Activated CD4-positive, alpha-beta T cell treated with anti-CD3 and anti-CD28 coated beads, Interleukin-2, amount 10 ng/mL, durations not matched to agents 24 days and 14 days (primary cell): ENCODE measurements at regions of chr19 and their contacts with region 1.

Region 1: DNA sequence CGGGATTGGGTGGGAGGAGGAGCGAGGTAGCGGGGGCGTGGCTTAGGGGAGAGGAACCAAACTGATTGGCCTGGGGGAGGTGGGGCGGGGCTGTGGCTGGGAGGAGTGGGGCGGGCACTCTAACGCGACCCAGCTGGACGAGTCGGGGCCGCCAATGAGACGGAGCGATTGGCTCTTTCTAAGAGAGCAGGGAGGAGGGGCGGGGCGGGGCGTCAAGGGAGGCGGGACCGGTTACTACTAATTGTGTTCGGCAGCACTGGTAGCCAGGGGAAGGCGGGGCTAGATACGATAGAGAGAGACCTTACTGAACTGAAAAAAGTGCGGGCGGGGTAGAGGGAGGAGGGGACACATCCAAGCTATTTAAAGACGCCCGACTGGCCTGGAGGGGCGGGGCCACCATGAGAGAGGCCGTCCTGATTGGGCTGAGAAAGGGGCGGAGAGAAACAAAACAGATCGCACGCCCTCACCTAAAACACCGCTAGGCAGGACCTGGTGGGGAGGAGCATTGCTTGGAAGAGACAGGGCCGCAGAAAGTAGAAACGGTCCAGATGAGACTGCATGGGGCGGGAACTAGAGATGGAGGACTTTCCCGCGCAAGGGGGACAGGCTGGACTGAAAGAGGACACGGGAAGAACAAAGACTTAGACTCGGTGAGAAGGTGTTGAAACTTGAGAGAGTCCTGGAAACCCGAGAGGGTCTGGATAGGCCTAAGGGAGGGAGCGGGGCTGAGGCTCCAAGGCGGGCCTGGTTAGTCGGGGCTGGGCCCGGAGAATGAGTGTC is at the start of gene KCNC3:
- DNase-seq: peak; percentile 98
- H3K4me3 Mint-ChIP-seq: peak within 1 kb of the TSS; percentile 89
- H3K27ac Mint-ChIP-seq: peak within 1 kb of the TSS; percentile 92
- H3K4me1 Mint-ChIP-seq: peaks cover 73% of the 10 kb centered on the region
- H3K27me3 Mint-ChIP-seq: peaks cover 20% of the 10 kb centered on the region
- total RNA-seq, gene KCNC3: 20.3 TPM in 2 replicates

Region 2: DNA sequence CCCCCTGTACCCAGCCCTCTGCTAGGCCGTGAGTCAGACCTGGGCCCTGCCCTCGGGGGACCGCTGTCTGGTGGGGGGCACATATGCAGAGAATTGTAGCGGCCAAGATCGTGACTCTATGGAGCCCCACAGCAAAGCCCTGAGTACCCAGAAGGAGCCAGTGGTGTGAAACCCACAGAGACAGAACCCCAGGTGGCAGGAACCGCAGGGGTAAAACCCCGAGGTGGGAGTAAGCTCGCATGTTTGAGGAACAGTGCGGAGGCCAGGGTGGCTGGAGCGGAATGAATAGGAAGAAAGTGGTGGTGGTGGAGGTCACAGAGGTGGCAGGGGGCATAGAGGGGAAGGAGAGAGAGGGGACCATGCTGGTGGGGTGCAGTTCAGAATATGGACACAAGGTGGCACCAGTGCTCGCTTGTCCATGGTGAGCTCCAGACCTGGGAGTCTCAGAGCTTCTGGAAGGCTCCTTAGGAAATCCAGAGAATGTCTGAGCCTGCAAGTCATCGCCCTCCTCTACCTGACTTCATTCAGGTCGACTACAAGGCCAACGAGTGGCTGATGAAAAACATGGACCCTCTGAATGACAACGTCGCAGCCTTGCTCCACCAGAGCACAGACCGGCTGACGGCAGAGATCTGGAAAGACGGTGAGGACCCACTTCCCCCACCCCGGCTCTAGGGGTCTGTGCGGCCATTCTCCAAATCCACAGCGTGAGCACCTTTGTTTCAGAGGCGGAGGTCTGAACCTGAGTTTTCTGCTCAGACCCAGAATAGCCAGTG is 77.0 kb before region 1 on chr19:
- intact Hi-C with region 1: loop called (anchors 5 kb)
- DNase-seq: peak; percentile 74
- H3K4me3 Mint-ChIP-seq: no peak overlapping the region
- H3K27ac Mint-ChIP-seq: no peak overlapping the region
- H3K4me1 Mint-ChIP-seq: no peaks in the 10 kb centered on the region
- H3K27me3 Mint-ChIP-seq: no peaks in the 10 kb centered on the region

Region 3: DNA sequence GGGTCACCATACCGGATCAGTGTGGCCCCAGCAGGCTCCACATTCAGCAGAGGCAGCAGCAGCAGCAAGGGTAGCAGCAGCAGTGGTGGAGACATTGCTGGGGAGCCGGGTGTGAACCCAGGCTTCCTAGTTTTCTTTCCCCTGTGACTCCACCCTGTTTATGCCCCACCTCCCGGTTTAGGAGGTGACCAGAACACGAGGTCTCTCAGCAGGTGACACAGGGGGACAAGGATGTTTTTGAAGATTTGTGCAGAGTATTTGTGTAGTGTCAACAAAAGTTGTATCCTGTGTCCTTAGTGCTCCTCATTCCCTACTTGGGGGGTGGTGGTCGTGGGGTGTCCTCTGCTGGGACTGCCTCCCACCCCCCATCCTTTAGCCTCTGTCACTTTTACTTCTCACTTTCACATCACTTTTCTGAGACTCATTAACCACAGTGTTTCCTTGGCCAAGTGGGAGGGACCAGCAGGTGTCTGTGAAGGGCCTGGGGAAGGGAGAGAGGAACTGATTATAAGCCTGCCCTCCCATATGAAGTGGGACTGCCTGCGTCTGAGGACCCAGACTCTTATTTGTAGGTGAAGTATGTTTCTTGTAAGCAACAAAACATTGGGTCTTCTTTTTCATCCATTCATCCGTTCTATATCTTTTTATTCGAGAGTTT is 15.5 kb after region 1 on chr19:
- intact Hi-C with region 1: loop called (anchors 1 kb)
- DNase-seq: no peak
- H3K4me3 Mint-ChIP-seq: peak overlapping the region; percentile 39
- H3K27ac Mint-ChIP-seq: peak overlapping the region; percentile 70
- H3K4me1 Mint-ChIP-seq: peaks cover 27% of the 10 kb centered on the region
- H3K27me3 Mint-ChIP-seq: no peaks in the 10 kb centered on the region

Region 4: DNA sequence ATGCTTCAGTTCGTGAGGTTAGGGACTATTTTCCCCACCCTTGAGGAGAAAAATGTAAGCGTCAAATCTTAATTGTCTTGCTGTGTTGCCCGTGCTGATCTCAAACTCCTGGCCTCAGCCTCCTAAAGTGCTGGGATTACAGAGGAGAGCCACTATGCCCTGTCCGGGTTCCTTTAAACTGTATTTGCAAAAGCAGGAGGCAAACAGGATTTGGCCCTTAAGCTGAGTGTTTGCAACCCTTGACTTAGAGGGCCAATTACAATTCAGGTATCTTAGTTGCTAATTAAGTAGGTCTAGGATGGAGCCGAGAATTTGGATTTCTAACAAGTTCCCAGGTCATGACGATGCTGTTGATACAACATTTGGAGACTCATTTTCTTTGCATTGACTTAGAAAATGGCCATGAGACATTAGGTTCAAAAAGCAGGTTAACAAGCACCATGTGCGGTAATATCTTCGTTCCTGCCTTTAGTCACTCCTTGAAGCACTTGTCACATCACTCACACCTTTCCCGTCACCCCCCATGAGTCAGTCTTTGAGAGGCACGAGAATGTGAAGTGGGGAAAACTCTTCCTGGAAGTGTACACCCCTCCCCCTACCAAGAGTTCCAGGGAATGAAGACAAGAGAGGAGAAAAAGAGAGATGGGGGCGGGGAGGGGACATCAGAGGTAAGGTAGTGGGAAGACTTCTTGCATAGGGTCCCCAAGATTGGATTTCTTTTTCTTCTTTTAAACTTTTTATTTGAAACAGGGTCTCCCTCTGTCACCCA is 33.5 kb after region 1 on chr19:
- intact Hi-C with region 1: no loop called
- DNase-seq: peak; percentile 73
- H3K4me3 Mint-ChIP-seq: peak overlapping the region; percentile 72
- H3K27ac Mint-ChIP-seq: peak overlapping the region; percentile 96
- H3K4me1 Mint-ChIP-seq: peaks cover 73% of the 10 kb centered on the region
- H3K27me3 Mint-ChIP-seq: no peaks in the 10 kb centered on the region

Region 5: GRCh38 chr19:50383852-50384684 is 54.7 kb after region 1 on chr19 and contains the start of gene POLD1:
- intact Hi-C with region 1: loop called (anchors 1 kb)
- DNase-seq: peak; percentile 100
- H3K4me3 Mint-ChIP-seq: peak within 1 kb of the TSS; percentile 93
- H3K27ac Mint-ChIP-seq: peak within 1 kb of the TSS; percentile 90
- H3K4me1 Mint-ChIP-seq: peaks cover 27% of the 10 kb centered on the region
- H3K27me3 Mint-ChIP-seq: no peaks in the 10 kb centered on the region
- total RNA-seq, gene POLD1: 188 and 204 TPM in 2 replicates

Region 6: GRCh38 chr19:50431343-50432220 is 102.2 kb after region 1 on chr19:
- intact Hi-C with region 1: no loop called
- DNase-seq: peak; percentile 98
- H3K4me3 Mint-ChIP-seq: peak overlapping the region; percentile 83
- H3K27ac Mint-ChIP-seq: peak overlapping the region; percentile 90
- H3K4me1 Mint-ChIP-seq: peaks cover 10% of the 10 kb centered on the region
- H3K27me3 Mint-ChIP-seq: peaks cover 15% of the 10 kb centered on the region